HCT116 (cell line): ENCODE measurements at regions of chr2 and their contacts with region 1.

Region 1: DNA sequence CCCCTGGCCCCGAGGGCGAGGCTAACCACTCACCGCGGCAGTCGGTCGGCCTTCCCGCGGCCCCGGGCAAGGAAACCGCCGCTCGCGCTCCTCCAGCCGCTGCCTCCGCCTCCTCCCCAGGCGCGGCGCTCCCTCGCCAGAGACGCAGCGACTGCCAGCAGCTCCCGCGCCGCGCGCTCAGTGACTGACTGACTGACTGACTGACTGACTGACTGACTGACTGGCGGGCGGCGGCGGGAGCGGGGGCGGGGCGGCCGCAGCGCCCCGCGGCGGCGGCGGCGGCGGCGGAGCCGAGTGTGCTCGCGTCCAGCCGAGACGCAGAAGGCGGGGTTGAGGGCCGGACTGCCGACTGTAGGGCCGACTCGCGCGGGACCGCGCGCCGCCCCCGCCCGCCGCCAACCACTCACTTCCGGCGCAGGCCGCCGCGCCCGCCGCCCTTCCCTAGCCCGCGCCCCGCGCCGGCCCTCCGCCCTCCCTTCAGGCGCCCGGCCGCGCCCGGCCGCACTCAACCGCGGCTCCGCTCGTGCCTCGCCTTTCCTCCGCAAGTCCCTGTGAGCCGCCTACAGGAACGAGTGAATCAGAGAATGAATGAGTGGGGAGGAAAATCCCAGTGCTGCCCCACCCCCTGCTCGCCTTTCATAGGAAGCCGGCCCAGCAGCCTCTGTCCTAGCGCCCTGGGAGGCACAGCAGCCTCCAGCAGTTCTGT is at the start of gene RAPH1:
- DNase-seq: peak; percentile 57
- ATAC-seq: peak; percentile 93
- H3K4me3 ChIP-seq: peak within 1 kb of the TSS; percentile 69 to 85
- H3K27ac ChIP-seq: peak within 1 kb of the TSS; percentile 84
- H3K4me1 ChIP-seq: peaks cover 12 to 23% of the 10 kb centered on the region in 2 experiments; a peak in 3 of 4 replicates
- H3K27me3 ChIP-seq: no peaks in the 10 kb centered on the region
- CTCF ChIP-seq: no peak
- POLR2A ChIP-seq: no peak
- RAD21 ChIP-seq: no peak
- total RNA-seq, gene RAPH1: 22.3 TPM

Region 2: GRCh38 chr2:203578759-203579643 is 43.8 kb after region 1 on chr2:
- CTCF ChIA-PET with region 1: no interaction called
- POLR2A ChIA-PET with region 1: no interaction called
- RAD21 ChIA-PET with region 1: no interaction called
- intact Hi-C with region 1: loop called (anchors 1 kb)
- DNase-seq: peak; percentile 93
- ATAC-seq: peak; percentile 96
- H3K4me3 ChIP-seq: peak overlapping the region in 1 of 2 experiments; percentile 32; a peak in 2 of 4 replicates
- H3K27ac ChIP-seq: peak overlapping the region; percentile 64
- H3K4me1 ChIP-seq: peaks cover 20 to 34% of the 10 kb centered on the region in 2 experiments
- H3K27me3 ChIP-seq: no peaks in the 10 kb centered on the region
- CTCF ChIP-seq: no peak
- POLR2A ChIP-seq: no peak
- RAD21 ChIP-seq: peak; percentile 46